PC-9 (cell line): ENCODE measurements at regions of chrX and their contacts with region 1.

Region 1: DNA sequence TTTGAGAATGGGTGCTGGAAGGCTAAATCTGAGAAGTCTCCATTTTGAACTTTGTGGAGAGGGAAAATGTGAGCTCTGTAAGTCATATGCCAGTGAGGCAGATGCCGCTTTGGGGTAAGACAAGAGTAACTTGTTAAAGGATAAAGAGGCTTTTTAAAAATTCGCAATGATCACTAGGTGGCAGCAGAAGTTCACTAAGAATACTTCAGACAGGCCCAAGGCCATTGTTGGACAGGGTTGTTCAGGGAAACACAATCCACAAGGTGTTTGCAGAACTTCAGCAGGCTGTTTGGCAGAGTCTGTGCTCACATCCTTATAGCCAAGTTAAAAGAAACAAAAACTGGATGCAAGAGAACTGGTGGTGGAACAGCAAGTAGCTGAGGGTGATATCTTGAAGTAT is 13.7 kb upstream of the PIGA start:
- DNase-seq: peak; percentile 16 to 57
- H3K4me3 ChIP-seq: no peak overlapping the region
- H3K27ac ChIP-seq: no peak overlapping the region
- H3K4me1 ChIP-seq: no peaks in the 10 kb centered on the region
- H3K27me3 ChIP-seq: no peaks in the 10 kb centered on the region
- CTCF ChIP-seq: peak; percentile 72

Region 2: DNA sequence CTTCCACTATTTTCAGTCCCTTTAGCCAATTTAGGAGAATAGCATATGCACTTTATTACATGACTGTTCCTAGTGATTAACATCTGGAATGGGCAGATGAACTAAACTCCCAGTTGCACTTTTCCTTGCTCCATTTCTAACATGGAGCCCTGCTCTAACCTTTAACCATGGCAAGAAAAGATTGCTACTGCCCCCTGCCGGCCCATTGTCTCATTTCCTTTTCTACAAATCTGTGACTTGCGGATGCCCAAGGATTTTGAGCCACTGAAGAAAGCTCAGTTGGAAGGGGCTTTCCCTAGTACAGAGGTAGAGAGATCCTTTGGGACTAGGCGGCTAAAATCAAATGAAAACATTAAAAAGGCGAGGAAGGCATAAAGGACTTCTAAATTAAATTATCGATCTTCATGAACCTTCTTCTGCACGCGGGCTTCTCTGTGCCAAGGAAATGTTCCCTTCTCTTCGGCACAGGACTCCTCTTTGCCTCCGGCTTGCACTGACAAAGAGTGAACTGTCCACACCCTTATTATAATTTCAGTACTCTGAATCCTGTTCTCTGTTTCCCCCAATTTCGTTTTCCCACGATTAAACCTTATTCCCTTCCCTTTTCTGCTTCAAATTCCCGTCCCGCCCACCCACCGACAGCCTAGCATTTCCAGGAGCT is 820.3 kb before region 1 on chrX:
- CTCF ChIA-PET with region 1: interaction called, 15 read pairs
- POLR2A ChIA-PET with region 1: no interaction called
- intact Hi-C with region 1: no loop called
- DNase-seq: peak in 1 of 2 experiments; percentile 42
- H3K4me3 ChIP-seq: no peak overlapping the region
- H3K27ac ChIP-seq: no peak overlapping the region
- H3K4me1 ChIP-seq: no peaks in the 10 kb centered on the region
- H3K27me3 ChIP-seq: no peaks in the 10 kb centered on the region
- CTCF ChIP-seq: peak; percentile 70

Region 3: DNA sequence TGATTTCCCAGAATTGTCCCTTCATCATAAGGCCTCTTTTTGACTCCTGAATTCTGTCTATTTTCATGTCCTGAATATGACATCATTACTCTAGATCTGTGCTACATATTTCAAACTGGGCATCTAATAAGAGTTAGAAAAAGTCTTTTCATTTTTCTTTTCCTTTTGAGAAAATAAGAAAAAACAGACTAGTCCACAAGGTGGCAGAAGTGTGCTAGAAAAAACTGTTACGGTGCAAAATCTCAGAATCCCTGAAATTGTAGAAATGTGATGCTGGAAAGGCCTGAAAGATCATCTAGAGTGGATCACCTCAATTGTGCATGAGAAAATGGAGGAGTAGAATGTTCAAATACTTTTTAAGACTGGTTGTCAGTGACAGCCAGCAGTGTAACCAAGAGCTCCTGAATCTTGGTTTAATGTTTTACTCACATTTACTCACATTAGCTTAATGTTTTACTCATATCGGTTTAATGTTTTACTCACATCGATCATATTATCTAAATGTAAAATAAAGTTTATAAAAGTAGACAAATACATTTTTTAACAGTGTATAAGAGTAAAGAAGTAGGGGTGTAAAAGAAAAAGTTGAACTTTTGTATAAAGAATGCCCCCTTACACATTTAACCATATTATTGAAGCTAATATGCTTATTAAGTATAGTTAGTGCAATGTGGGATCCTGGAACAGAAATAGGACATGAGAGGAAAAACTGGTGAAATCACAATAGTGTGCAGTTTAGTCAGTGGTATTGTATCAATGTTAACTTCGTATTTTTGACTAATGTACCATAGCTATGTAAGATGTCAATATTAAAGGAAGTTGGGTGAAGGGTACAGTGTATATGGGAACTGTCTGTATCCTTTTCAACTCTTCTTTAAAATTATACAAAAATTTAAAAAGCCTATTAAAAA is 48.9 kb before region 1 on chrX:
- CTCF ChIA-PET with region 1: no interaction called
- POLR2A ChIA-PET with region 1: no interaction called
- intact Hi-C with region 1: loop called (anchors 1 kb)
- DNase-seq: no peak
- H3K4me3 ChIP-seq: no peak overlapping the region
- H3K27ac ChIP-seq: no peak overlapping the region
- H3K4me1 ChIP-seq: peaks cover 5% of the 10 kb centered on the region
- H3K27me3 ChIP-seq: no peaks in the 10 kb centered on the region
- CTCF ChIP-seq: peak; percentile 75